Uterus (tissue), 4 donors: ENCODE measurements at regions of chr11 and their contacts with region 1.

Region 1: GRCh38 chr11:22829231-22830081 is at the start of gene SVIP:
- DNase-seq: peak; percentile 92 to 94
- H3K4me3 ChIP-seq: peak within 1 kb of the TSS; percentile 78 to 92
- H3K27ac ChIP-seq: peak within 1 kb of the TSS; percentile 79 to 89
- H3K4me1 ChIP-seq: no peaks in the 10 kb centered on the region
- H3K27me3 ChIP-seq: no peaks in the 10 kb centered on the region
- CTCF ChIP-seq: peak; percentile 54 to 69 (median 62)
- POLR2A ChIP-seq: peak; percentile 53 to 79
- total RNA-seq, gene SVIP: 2.0 to 20.7 (median 11.9) TPM

Region 2: GRCh38 chr11:22625448-22626287 is 203.8 kb before region 1 on chr11 and contains the start of gene FANCF:
- intact Hi-C with region 1: loop called (anchors 10 kb)
- DNase-seq: peak; percentile 93 to 97
- H3K4me3 ChIP-seq: peak within 1 kb of the TSS; percentile 78 to 83
- H3K27ac ChIP-seq: peak within 1 kb of the TSS; percentile 88 to 90
- H3K4me1 ChIP-seq: peaks cover 0 to 10% of the 10 kb centered on the region in 2 donors
- H3K27me3 ChIP-seq: no peaks in the 10 kb centered on the region
- CTCF ChIP-seq: peak in 1 of 4 experiments; percentile 9
- POLR2A ChIP-seq: peak in 1 of 2 donors; percentile 31
- total RNA-seq, gene FANCF: 0.88 to 27.6 (median 6.4) TPM

Region 3: DNA sequence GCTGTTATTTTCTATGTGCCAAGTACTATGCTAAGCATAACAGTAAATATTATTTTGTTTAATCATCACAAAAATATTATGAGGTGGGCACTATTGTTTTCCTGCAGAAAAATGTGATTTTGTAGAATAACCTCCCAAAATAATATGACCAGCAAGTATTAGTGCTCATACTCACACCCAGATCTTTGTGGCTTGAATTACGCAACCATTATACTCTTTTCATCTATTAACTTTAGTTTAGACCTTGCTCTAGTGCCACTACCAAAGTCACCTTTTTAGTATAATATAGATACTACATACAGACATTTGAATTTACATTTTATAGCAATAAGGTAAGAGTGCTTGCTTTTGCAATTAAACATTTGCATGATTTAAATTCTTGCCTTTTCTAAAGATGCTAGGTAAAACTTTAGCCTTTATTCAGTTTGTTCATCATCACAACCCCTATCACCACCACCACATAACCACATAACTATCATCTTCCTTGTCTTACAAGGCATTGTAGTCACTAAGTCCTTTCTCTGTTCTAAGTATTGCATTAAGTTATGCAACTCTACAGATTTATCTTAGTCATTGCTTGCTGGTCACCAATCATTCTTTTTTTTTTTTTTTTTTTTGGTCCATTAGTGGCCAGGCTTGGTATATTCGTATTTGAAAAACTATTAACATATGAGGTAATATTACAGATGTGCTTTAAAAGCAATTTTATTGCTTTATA is 94.7 kb before region 1 on chr11:
- intact Hi-C with region 1: no loop called
- DNase-seq: no peak
- H3K4me3 ChIP-seq: no peak overlapping the region
- H3K27ac ChIP-seq: no peak overlapping the region
- H3K4me1 ChIP-seq: no peaks in the 10 kb centered on the region
- H3K27me3 ChIP-seq: no peaks in the 10 kb centered on the region
- CTCF ChIP-seq: no peak
- POLR2A ChIP-seq: no peak